SK-N-SH (cell line): ENCODE measurements at regions of chr1 and their contacts with region 1.

Region 1: DNA sequence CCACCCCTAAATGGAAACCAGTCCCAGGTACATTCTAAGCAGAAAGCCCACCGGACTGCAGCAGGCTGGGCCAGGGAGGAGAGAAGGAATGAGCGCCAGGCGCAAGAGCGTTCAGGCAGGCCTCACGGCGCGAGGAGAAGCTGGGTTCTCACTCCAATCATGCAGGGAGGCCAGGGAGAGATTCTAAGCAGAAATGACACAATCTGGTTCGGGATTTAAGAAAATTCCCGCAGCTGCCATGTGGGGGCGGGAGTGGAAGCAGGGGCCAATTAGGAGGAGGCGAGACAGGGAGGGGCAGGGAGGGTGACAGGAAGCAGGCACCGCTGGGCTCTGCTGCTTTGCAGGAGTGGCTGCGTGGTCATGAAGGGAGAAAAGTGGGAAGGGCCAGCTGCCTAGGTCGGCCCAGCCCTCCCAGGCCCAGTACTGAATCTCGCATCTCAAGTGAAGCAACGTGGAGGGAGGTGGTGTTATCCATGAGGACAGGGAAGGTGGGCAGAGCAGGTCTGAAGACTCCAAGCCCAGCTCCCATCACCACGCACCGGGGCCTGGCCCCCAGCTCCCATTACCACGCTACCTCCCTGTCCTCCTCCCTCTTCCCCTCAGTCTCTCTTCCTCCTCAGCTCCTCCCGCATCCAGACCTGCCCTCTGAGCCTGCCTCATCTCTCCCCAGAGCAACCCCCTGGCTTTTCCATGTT is 11.8 kb downstream of the NPHP4 start:
- DNase-seq: peak; percentile 84
- H3K4me3 ChIP-seq: no peak overlapping the region
- H3K27ac ChIP-seq: no peak overlapping the region; a peak in 1 of 4 replicates
- H3K4me1 ChIP-seq: peaks cover 4 to 16% of the 10 kb centered on the region in 2 experiments; a peak in 2 of 4 replicates
- H3K27me3 ChIP-seq: no peaks in the 10 kb centered on the region
- CTCF ChIP-seq: peak; percentile 9; the same call in 1 of the 2 replicates
- EP300 ChIP-seq: no peak
- RAD21 ChIP-seq: peak; percentile 9; the same call in 1 of the 2 replicates

Region 2: DNA sequence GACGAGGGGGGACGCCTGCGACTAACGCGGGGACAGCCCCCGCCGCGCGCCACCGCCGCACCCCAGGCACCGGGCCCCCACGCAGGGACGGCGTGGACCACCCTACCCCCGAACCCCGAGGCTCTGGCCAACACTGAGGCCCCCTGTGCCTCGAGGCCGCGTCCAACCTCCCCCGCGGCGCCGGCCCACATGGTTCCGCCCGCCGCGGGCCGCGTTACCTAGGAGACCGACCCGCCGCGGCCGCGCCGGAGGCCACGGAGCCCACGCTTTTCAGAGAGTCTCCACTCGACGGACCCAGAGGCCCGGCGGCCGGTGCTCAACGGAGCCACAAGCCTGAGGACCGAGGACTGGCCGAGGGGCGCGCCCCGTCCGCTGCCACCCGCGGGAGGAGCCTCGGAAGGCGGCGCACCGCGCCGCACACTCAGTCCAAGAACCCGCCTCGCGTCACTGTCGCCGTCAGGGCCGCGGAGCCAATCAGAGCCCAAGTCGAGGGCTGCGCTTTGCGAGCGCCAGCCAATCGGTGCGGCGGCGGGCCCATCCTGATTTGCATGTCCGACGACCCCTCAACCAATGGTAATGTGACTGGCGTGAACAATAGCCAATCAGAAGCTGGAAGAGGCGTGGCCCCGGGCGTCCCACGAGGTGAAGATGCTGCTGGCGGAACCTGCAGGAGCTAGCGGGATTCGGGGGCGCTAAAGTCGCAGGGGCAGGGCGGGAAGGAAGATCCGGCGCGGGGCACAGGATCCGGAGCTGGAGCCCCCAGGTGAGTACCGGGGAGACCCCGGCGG is 11.8 kb after region 1 on chr1 and contains the start of gene NPHP4:
- CTCF ChIA-PET with region 1: interaction called, 13 read pairs
- POLR2A ChIA-PET with region 1: interaction called, 4 read pairs
- DNase-seq: peak; percentile 99
- H3K4me3 ChIP-seq: peak within 1 kb of the TSS; percentile 75 to 88
- H3K27ac ChIP-seq: peak within 1 kb of the TSS; percentile 83 to 88
- H3K4me1 ChIP-seq: peaks cover 0 to 20% of the 10 kb centered on the region in 2 experiments; a peak in 1 of 4 replicates
- H3K27me3 ChIP-seq: no peaks in the 10 kb centered on the region
- CTCF ChIP-seq: peak; percentile 9; the same call in 1 of the 2 replicates
- EP300 ChIP-seq: peak; percentile 15 to 20; a peak in 1 of 4 replicates
- RAD21 ChIP-seq: no peak
- polyA plus RNA-seq, gene NPHP4: 4.6 and 7.0 TPM in 2 replicates